ENCODE measurements at regions of chr1 and their contacts with region 1.

Region 1: DNA sequence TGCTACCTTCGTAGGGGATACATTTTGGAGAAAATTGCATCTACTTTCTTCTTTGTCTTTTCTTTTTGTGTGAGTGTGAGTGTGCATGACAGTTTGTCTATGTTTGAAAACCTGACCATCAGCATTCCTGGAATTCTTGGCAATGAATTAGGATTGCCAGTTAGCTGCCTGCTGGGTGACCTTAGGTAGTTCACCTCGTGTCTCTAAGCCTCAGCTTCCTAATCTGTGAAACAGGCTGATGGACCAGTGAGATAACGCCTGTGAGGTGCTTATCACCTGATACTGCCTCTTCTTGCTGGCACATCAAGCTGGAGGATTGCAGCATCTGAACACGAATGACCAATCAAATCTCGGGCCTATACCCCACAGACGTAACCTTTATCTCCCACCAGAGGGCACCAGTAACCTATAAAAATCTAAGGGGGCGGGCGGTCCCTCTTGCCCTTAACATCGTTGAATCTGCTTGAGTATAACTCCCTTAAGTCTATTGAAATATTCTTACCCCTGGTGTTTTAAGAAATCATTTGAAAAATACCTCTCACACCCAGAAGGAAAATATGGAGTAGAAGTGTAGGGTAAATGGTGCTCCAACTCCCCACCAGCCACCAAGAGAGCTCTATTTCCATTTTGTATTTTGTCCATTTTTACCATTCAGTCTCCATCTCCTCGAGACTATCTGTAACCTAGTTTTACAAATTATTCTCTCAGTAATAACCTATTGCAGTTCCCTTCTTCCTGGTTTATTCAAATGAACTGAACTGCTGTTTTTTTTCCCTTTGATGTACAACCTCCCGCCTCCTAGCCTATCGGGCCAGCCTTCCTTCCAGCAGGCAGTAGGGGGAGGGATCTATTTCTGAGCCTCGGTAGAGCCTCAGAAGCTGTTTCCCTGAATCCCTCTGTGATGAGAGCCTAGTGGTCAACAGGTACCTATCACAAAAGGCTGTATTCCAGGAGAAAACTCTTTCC is 49.7 kb downstream of the MDM4 start:
- DNase-seq: no peak
- H3K4me3 ChIP-seq: no peak overlapping the region
- CTCF ChIP-seq: peak; percentile 54

Region 2: DNA sequence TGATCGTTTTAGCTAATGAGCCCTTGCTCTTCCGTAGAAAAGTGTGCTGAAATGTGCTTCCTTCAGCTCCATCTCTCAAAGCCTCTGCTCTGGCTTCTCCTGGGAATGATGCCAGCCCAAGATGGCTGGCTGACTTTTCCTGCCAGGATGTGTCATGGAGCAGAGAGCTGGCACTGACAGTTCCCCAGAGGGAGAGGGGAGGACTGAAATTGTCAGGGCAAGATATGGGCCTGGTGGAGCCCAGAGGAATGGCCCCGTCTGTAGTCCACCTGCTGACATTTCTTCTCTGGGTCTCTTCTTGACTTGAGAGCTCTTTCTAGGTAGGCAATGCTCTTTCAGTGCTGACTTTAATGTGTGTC is 180.9 kb before region 1 on chr1:
- CTCF ChIA-PET with region 1: no interaction called
- POLR2A ChIA-PET with region 1: no interaction called
- DNase-seq: no peak
- H3K4me3 ChIP-seq: no peak overlapping the region
- CTCF ChIP-seq: no peak

Region 3: GRCh38 chr1:204506201-204506960 is 59.5 kb before region 1 on chr1:
- CTCF ChIA-PET with region 1: no interaction called
- POLR2A ChIA-PET with region 1: no interaction called
- DNase-seq: peak; percentile 84
- H3K4me3 ChIP-seq: peak overlapping the region; percentile 52
- CTCF ChIP-seq: no peak

Region 4: GRCh38 chr1:204578867-204579664 is 13.2 kb after region 1 on chr1:
- CTCF ChIA-PET with region 1: interaction called, 33 read pairs
- POLR2A ChIA-PET with region 1: no interaction called
- DNase-seq: no peak
- H3K4me3 ChIP-seq: no peak overlapping the region
- CTCF ChIP-seq: no peak

Region 5: GRCh38 chr1:204591594-204592051 is 25.7 kb after region 1 on chr1:
- CTCF ChIA-PET with region 1: interaction called, 18 read pairs
- POLR2A ChIA-PET with region 1: no interaction called
- DNase-seq: no peak
- H3K4me3 ChIP-seq: no peak overlapping the region
- CTCF ChIP-seq: no peak

Region 6: DNA sequence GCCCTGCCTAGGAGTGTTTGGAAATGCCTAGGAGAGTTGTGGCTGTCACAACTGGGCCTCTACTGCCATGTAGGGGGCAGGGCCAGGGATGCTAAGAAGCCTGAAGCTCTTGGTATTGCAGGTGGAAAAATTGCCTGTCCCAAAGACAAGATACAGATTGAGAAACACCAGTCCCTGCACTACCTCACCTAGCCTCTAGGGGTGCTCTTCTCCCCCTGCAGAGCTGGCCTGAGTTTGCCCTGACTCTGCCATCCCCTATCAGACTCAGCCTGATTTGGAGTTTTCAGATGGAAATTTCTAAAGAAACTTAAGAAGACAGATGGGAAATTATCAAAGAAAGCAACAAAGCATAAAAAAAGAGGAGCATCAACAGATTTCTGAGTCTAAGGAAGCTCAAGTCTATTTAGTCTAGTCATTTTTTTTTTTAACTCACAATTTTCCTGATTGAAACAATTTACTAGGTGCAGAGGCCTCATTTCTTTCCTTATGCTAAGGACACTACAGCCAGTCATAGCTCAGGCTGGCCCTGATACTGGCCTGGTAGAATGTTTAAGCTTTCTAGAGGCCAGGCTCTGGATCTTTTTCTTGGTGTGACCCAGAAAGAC is 181.0 kb after region 1 on chr1:
- CTCF ChIA-PET with region 1: interaction called, 12 read pairs
- POLR2A ChIA-PET with region 1: no interaction called
- DNase-seq: no peak
- H3K4me3 ChIP-seq: no peak overlapping the region
- CTCF ChIP-seq: peak; percentile 94

Region 7: DNA sequence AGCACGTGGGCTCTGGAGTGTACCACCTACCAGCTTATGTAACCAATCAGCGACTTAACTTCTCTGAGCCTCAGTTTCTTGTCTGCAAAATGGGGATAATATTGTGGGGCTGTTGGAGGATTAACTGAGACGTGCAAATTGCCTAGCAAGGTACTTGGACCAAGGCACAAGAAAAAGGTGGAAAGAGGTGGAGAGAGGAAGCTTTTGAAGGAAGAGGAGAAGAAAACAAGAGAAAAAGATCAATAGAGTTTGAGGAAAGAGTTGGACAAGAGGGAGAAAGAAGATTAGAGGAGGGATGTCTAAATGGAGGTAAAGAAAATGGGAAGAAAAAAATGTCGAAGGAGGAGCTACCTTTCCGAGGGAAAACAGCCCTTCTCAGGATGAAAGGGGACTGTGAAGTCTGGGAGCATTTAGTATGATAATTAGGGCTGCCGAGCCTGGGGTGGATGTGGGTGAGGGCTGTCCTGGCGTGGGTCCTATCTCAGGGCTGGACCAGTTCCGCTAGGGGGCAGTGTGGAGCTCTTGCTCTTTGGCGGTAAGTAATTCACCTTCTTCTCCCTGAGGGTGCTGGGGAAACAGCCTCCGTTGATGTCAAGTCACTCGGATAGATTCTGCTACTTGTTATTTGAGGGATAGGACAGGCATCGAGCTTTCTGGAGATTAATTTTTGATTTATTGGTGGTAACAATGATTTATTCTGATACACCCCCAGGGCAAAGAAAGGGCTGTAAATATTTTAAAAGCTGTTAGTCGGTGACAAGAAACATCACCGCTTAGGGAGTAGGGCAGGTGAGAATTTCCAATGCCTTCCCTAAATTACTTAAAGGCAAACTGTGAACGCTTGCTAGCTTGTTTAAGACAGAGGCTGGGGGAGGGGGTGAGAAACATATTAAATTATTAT is 225.8 kb after region 1 on chr1:
- CTCF ChIA-PET with region 1: interaction called, 21 read pairs
- POLR2A ChIA-PET with region 1: no interaction called
- DNase-seq: no peak
- H3K4me3 ChIP-seq: no peak overlapping the region
- CTCF ChIP-seq: peak; percentile 68